Naive thymus-derived CD4-positive, alpha-beta T cell (primary cell): ENCODE measurements at regions of chr15 and their contacts with region 1.

Region 1: DNA sequence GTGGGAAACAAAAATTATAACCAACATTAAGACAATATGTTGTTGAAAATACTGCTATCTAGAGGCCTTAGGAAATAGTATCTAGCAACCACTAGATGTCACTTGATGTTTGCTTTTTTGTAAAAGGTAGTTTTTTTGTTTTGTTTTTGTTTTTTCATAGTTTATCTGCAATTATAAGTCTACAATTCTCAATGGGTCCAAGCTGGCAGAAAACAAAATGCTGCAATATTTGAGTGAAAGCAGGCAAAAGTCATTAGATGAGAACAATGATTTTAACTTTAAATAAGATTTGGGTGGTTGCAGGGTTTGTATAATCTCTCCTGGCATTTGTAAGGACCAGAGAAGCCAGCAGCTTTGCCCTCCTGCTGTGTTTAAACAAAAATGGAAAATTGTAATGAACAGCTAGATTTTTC is 27.0 kb downstream of the DUT start:
- DNase-seq: no peak
- ATAC-seq: no peak
- H3K4me3 ChIP-seq: no peak overlapping the region
- H3K4me3 Mint-ChIP-seq: no peak overlapping the region
- H3K27ac ChIP-seq: no peak overlapping the region
- H3K27ac Mint-ChIP-seq: no peak overlapping the region
- H3K4me1 ChIP-seq: no peaks in the 10 kb centered on the region
- H3K4me1 Mint-ChIP-seq: peaks cover 0 to 11% (median 8%) of the 10 kb centered on the region in 7 donors
- H3K27me3 ChIP-seq: no peaks in the 10 kb centered on the region
- H3K27me3 Mint-ChIP-seq: no peaks in the 10 kb centered on the region

Region 2: GRCh38 chr15:48800811-48801455 is 442.7 kb after region 1 on chr15:
- CTCF ChIA-PET with region 1: no interaction called
- POLR2A ChIA-PET with region 1: no interaction called
- intact Hi-C with region 1: loop called in 1 of 2 experiments (anchors 2 kb)
- DNase-seq: peak in 1 of 9 donors; percentile 10
- ATAC-seq: no peak
- H3K4me3 ChIP-seq: no peak overlapping the region
- H3K4me3 Mint-ChIP-seq: no peak overlapping the region
- H3K27ac ChIP-seq: no peak overlapping the region
- H3K27ac Mint-ChIP-seq: no peak overlapping the region
- H3K4me1 ChIP-seq: no peaks in the 10 kb centered on the region
- H3K4me1 Mint-ChIP-seq: peaks cover 4 to 51% (median 17%) of the 10 kb centered on the region in 7 donors
- H3K27me3 ChIP-seq: no peaks in the 10 kb centered on the region
- H3K27me3 Mint-ChIP-seq: no peaks in the 10 kb centered on the region

Region 3: GRCh38 chr15:48855501-48856440 is 497.5 kb after region 1 on chr15:
- CTCF ChIA-PET with region 1: no interaction called
- POLR2A ChIA-PET with region 1: no interaction called
- intact Hi-C with region 1: loop called in 1 of 2 experiments (anchors 2 kb)
- DNase-seq: no peak
- ATAC-seq: no peak
- H3K4me3 ChIP-seq: no peak overlapping the region
- H3K4me3 Mint-ChIP-seq: no peak overlapping the region
- H3K27ac ChIP-seq: no peak overlapping the region
- H3K27ac Mint-ChIP-seq: no peak overlapping the region
- H3K4me1 ChIP-seq: no peaks in the 10 kb centered on the region
- H3K4me1 Mint-ChIP-seq: peaks cover 0 to 5% (median 0%) of the 10 kb centered on the region in 7 donors
- H3K27me3 ChIP-seq: no peaks in the 10 kb centered on the region
- H3K27me3 Mint-ChIP-seq: peaks cover 11 to 30% (median 16%) of the 10 kb centered on the region in 5 donors